CD8-positive, alpha-beta T cell (primary cell): ENCODE measurements at regions of chr4 and their contacts with region 1.

Region 1: DNA sequence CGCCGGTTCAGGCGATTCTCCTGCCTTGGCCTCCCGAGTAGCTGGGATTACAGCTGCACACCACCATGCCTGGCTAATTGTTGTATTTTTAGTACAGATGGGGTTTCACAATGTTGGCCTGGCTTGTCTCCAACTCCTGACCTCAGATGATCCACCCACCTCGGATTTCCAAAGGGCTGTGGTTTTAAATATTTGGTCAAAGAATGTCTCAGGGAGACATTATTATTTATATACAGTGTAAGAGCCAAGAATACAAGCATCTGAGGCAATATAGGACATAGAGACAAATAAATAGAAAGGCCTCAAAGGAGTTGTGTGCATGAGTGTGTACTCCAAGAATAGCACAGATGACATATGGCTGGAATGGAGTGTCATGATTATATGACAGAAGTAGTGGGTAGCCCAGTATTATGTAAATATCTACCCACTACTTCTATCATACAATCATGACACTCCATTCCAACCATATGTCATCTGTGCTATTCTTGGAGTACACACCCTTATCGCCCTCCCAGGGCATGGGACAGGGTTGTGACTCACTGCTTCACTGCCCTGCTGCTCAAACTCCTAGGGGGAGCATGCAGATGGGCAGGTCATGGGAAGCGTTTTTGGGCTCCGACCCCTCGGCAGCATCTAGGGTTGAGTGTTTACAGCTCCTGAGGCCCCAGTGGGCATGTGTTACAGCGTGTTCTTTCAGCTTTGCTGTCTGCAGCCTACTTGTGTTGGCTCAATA is 1649.8 kb upstream of the PCDH10 start:
- DNase-seq: no peak
- ATAC-seq: no peak
- H3K4me3 ChIP-seq: no peak overlapping the region
- H3K4me3 Mint-ChIP-seq: no peak overlapping the region
- H3K27ac ChIP-seq: no peak overlapping the region
- H3K27ac Mint-ChIP-seq: no peak overlapping the region
- H3K4me1 ChIP-seq: no peaks in the 10 kb centered on the region
- H3K4me1 Mint-ChIP-seq: no peaks in the 10 kb centered on the region
- H3K27me3 ChIP-seq: no peaks in the 10 kb centered on the region
- H3K27me3 Mint-ChIP-seq: no peaks in the 10 kb centered on the region
- CTCF ChIP-seq: no peak

Region 2: DNA sequence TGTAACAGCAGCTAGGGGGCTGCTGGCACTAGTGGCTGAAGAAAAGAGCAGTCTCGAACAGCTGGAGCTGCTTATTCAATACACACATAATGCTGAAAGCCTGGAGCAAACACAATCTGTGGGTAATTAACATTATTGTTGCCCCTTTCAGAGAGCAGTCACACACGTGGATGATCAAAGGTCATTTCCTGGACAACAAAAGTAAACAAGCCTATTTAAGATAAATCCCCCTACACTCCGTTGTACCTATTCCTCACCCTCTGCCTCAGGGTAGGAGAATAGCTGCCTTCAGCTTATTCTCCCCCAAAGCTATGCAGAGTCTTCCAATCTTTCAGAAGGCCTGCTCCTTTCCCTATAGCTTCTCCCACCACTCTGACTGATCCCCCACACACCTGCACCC is 1599.5 kb before region 1 on chr4:
- CTCF ChIA-PET with region 1: no interaction called
- POLR2A ChIA-PET with region 1: no interaction called
- intact Hi-C with region 1: loop called in 1 of 2 experiments (anchors 5 kb)
- DNase-seq: no peak
- ATAC-seq: no peak
- H3K4me3 ChIP-seq: no peak overlapping the region
- H3K4me3 Mint-ChIP-seq: no peak overlapping the region
- H3K27ac ChIP-seq: no peak overlapping the region
- H3K27ac Mint-ChIP-seq: no peak overlapping the region
- H3K4me1 ChIP-seq: no peaks in the 10 kb centered on the region
- H3K4me1 Mint-ChIP-seq: no peaks in the 10 kb centered on the region
- H3K27me3 ChIP-seq: no peaks in the 10 kb centered on the region
- H3K27me3 Mint-ChIP-seq: no peaks in the 10 kb centered on the region
- CTCF ChIP-seq: no peak

Region 3: DNA sequence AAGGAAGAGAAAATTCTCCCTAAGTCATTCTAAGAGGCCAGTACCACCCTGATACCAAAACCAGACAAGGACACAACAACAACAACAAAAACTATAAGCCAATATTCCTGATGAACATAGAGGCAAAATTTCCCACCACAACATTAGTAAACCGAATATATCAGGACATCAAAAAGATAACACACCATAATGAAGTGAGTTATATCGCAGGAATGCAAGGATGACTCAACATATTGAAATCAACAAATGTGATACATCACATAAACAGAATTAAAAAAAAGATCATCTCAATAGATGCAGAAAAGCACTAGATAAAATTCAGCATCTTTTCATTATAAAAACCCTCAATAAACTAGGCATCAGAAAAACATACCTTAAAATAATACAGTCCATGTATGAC is 194.6 kb before region 1 on chr4:
- CTCF ChIA-PET with region 1: no interaction called
- POLR2A ChIA-PET with region 1: no interaction called
- intact Hi-C with region 1: no loop called
- DNase-seq: no peak
- ATAC-seq: no peak
- H3K4me3 ChIP-seq: no peak overlapping the region
- H3K4me3 Mint-ChIP-seq: no peak overlapping the region
- H3K27ac ChIP-seq: no peak overlapping the region
- H3K27ac Mint-ChIP-seq: no peak overlapping the region
- H3K4me1 ChIP-seq: no peaks in the 10 kb centered on the region
- H3K4me1 Mint-ChIP-seq: no peaks in the 10 kb centered on the region
- H3K27me3 ChIP-seq: no peaks in the 10 kb centered on the region
- H3K27me3 Mint-ChIP-seq: no peaks in the 10 kb centered on the region
- CTCF ChIP-seq: no peak

Region 4: GRCh38 chr4:131441004-131441688 is 58.2 kb before region 1 on chr4:
- CTCF ChIA-PET with region 1: no interaction called
- POLR2A ChIA-PET with region 1: no interaction called
- intact Hi-C with region 1: loop called in 1 of 2 experiments (anchors 2 kb)
- DNase-seq: no peak
- ATAC-seq: no peak
- H3K4me3 ChIP-seq: no peak overlapping the region
- H3K4me3 Mint-ChIP-seq: no peak overlapping the region
- H3K27ac ChIP-seq: no peak overlapping the region
- H3K27ac Mint-ChIP-seq: no peak overlapping the region
- H3K4me1 ChIP-seq: no peaks in the 10 kb centered on the region
- H3K4me1 Mint-ChIP-seq: no peaks in the 10 kb centered on the region
- H3K27me3 ChIP-seq: no peaks in the 10 kb centered on the region
- H3K27me3 Mint-ChIP-seq: no peaks in the 10 kb centered on the region
- CTCF ChIP-seq: no peak

Region 5: DNA sequence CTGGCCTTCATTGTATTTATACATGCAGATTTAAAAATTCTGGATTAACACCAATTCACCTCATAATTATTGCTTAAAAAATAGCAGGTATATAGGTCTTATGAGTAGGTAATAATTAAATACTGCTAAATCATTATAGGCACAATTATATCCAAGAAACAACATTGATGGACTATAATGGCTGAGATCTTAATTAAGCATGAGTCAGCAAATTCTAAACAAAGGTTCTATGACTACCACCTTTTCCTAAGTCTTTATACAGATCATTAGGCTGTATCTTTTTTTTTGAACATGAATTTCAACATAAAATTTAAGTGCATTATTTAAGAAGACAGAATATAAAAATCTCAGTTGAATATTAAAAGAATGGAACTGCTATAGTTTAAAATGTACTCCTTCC is 28.9 kb before region 1 on chr4:
- CTCF ChIA-PET with region 1: no interaction called
- POLR2A ChIA-PET with region 1: no interaction called
- intact Hi-C with region 1: no loop called
- DNase-seq: no peak
- ATAC-seq: no peak
- H3K4me3 ChIP-seq: no peak overlapping the region
- H3K4me3 Mint-ChIP-seq: no peak overlapping the region
- H3K27ac ChIP-seq: no peak overlapping the region
- H3K27ac Mint-ChIP-seq: no peak overlapping the region
- H3K4me1 ChIP-seq: no peaks in the 10 kb centered on the region
- H3K4me1 Mint-ChIP-seq: no peaks in the 10 kb centered on the region
- H3K27me3 ChIP-seq: no peaks in the 10 kb centered on the region
- H3K27me3 Mint-ChIP-seq: no peaks in the 10 kb centered on the region
- CTCF ChIP-seq: no peak